Activated CD4-positive, alpha-beta T cell treated with anti-CD3 and anti-CD28 coated beads for 36 hours (primary cell): ENCODE measurements at regions of chr9 and their contacts with region 1.

Region 1: DNA sequence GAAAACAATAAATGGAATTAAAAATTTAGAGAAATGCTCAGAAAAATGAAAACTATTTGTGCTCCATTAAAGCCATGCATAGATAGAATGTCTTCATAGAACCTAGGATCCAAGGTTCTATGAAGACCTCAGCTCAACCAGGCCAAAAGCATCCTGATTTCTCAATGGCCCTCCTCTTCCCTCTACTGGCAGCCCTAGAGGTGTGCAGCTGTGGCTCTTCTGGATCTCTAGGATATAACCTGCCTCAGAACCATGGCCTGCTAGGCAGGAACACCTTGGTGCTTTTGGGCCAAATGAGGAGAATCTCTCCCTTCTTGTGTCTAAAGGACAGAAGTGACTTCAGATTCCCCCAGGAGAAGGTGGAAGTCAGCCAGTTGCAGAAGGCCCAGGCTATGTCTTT is 15.1 kb downstream of the IFNA1 start:
- DNase-seq: peak; percentile 37
- ATAC-seq: peak; percentile 70
- H3K4me3 Mint-ChIP-seq: no peak overlapping the region
- H3K27ac Mint-ChIP-seq: no peak overlapping the region
- H3K4me1 Mint-ChIP-seq: no peaks in the 10 kb centered on the region
- H3K27me3 Mint-ChIP-seq: peaks cover 2% of the 10 kb centered on the region

Region 2: GRCh38 chr9:21239911-21240310 is 215.4 kb before region 1 on chr9 and contains the start of gene IFNA14:
- CTCF ChIA-PET with region 1: interaction called, 6 read pairs
- POLR2A ChIA-PET with region 1: no interaction called
- intact Hi-C with region 1: loop called (anchors 1 to 10 kb)
- DNase-seq: no peak
- ATAC-seq: no peak
- H3K4me3 Mint-ChIP-seq: no peak within 1 kb of the TSS
- H3K27ac Mint-ChIP-seq: no peak within 1 kb of the TSS
- H3K4me1 Mint-ChIP-seq: peaks cover 10% of the 10 kb centered on the region
- H3K27me3 Mint-ChIP-seq: peaks cover 7% of the 10 kb centered on the region
- total RNA-seq, gene IFNA14: not detected

Region 3: DNA sequence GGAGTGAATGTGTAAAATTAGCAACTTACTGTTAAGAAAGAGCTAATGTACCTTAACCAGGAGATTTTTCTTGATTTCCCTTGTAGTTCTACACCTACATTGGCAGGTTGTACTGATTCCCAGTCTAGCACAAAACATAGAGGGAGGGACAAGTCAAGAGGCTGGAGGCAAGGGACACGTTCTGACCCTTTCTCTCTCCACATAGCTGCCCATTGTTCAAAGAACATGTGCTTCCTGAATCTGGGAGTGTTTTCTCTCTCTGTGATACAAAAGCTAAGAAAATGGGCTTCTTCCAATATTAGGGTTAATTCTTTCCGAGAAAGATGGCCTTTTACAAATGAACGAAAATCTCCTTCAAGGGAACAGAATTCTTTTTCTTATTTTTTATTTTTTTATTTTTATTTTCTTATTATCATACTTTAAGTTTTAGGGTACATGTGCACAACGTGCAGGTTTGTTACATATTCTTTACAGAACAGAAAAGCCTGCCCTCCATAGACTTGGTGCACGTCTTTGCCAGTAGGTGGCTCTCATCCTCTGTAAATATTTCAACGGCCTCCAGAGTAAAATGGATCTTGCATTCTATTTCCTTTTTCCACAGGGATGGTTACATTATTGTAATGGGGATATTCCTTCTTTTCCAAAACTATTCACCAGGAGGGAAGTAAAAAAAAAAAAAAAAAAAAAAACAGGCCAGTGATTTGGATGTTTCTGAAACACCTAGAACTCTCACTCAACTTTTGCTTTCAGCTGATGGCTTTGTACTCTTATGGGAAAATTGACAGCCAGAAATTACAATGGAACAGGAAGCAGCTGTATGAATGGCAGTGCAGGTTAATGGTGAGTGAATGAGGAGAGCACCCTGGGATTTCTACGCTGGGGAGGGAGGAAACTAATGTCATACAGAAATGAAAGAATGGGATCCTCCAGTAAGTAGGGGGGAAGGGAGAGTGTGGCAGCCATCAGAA is 137.1 kb before region 1 on chr9:
- CTCF ChIA-PET with region 1: interaction called, 12 read pairs
- POLR2A ChIA-PET with region 1: no interaction called
- intact Hi-C with region 1: loop called (anchors 1 to 2 kb)
- DNase-seq: peak; percentile 59
- ATAC-seq: peak; percentile 78
- H3K4me3 Mint-ChIP-seq: no peak overlapping the region
- H3K27ac Mint-ChIP-seq: no peak overlapping the region
- H3K4me1 Mint-ChIP-seq: peaks cover 5% of the 10 kb centered on the region
- H3K27me3 Mint-ChIP-seq: no peaks in the 10 kb centered on the region

Region 4: GRCh38 chr9:21465859-21466518 is 10.7 kb after region 1 on chr9:
- CTCF ChIA-PET with region 1: interaction called, 15 read pairs
- POLR2A ChIA-PET with region 1: no interaction called
- intact Hi-C with region 1: no loop called
- DNase-seq: no peak
- ATAC-seq: peak; percentile 78
- H3K4me3 Mint-ChIP-seq: no peak overlapping the region
- H3K27ac Mint-ChIP-seq: no peak overlapping the region
- H3K4me1 Mint-ChIP-seq: no peaks in the 10 kb centered on the region
- H3K27me3 Mint-ChIP-seq: peaks cover 2% of the 10 kb centered on the region